Transverse colon (tissue), 4 donors: ENCODE measurements at regions of chr7 and their contacts with region 1.

Region 1: DNA sequence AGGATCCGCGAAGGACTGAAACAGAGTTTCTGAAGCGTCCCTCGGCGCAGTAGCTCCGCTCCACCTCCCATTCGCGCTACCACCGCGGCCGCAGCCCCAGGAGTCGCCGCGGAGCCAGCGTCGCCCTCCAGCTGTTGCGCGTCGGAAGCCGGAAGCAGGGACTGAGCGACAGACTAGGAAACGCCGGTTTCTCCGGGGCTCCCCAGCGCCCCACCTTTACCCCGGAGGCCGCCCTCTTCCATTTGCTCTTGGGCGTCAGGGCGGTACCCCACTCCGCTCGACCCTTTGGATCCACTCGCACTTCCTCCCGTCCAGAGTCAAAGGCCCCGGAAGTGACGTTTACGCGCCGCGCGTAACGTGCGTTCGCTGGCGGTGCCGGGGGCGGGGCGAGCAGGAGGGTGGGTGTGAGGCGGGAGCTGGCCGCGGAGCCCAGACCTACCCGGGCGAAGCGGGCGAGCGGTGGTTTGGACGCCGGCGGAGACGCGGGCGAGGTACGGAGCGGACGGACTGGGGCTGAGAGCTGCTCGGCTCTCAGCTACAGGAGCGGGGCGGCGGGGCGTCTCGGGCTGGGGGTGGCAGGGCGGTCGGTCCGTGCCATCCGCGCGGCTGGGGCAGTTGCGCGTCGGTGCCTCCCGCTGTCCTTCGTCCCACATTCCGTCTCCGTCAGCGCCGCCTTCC is at the start of gene RABGEF1:
- DNase-seq: peak; percentile 99
- H3K4me3 ChIP-seq: peak within 1 kb of the TSS; percentile 79 to 100 (median 85)
- H3K27ac ChIP-seq: peak within 1 kb of the TSS; percentile 94 to 98 (median 98)
- H3K4me1 ChIP-seq: peaks cover 3 to 29% (median 22%) of the 10 kb centered on the region in 4 donors
- H3K27me3 ChIP-seq: no peaks in the 10 kb centered on the region
- CTCF ChIP-seq: peak in 1 of 5 experiments; percentile 5
- EP300 ChIP-seq: no peak
- POLR2A ChIP-seq: peak; percentile 97
- total RNA-seq, gene RABGEF1: 12.7 to 32.9 (median 30.4) TPM

Region 2: GRCh38 chr7:65892835-65893234 is 847.6 kb before region 1 on chr7:
- in situ Hi-C with region 1: no loop called
- intact Hi-C with region 1: no loop called
- DNase-seq: no peak
- H3K4me3 ChIP-seq: no peak overlapping the region
- H3K27ac ChIP-seq: no peak overlapping the region
- H3K4me1 ChIP-seq: peaks cover 0 to 6% (median 0%) of the 10 kb centered on the region in 4 donors
- H3K27me3 ChIP-seq: no peaks in the 10 kb centered on the region
- CTCF ChIP-seq: no peak
- EP300 ChIP-seq: no peak
- POLR2A ChIP-seq: no peak

Region 3: DNA sequence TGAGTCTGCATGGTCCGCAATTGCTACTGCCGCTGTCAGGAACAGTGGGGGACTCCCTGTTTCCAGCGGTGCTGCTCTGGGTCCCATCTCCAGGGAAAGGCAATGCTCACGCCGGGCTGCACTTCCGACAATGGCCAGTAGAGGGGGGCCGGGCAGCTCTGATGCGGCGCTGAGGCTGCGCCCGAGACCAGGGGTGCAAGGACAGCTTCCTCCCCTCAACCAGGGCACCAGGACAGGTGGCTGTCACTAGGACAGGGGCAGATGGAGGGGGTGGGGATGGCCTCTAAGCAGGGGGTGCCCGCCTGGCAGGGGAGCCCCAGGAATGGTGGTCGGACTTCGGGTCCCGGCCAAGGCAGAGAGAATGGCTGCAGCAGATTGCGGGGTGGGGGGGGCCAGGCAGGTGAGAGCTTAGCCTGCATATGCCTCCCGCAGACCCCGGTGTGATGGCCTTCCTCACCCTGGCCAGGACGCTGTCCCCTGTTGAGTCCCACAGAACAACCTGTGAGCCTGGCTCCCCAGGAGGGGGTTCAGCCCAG is 182.8 kb before region 1 on chr7:
- in situ Hi-C with region 1: no loop called
- intact Hi-C with region 1: loop called (anchors 10 kb)
- DNase-seq: peak; percentile 78
- H3K4me3 ChIP-seq: no peak overlapping the region
- H3K27ac ChIP-seq: no peak overlapping the region
- H3K4me1 ChIP-seq: peaks cover 0 to 9% (median 4%) of the 10 kb centered on the region in 4 donors
- H3K27me3 ChIP-seq: no peaks in the 10 kb centered on the region
- CTCF ChIP-seq: peak; percentile 95 to 99 (median 98)
- EP300 ChIP-seq: no peak
- POLR2A ChIP-seq: no peak

Region 4: GRCh38 chr7:66681491-66682349 is 58.7 kb before region 1 on chr7:
- in situ Hi-C with region 1: loop called in 1 of 4 experiments (anchors 10 kb)
- intact Hi-C with region 1: no loop called
- DNase-seq: peak; percentile 99
- H3K4me3 ChIP-seq: peak overlapping the region; percentile 70 to 83 (median 82)
- H3K27ac ChIP-seq: peak overlapping the region; percentile 97 to 100 (median 98)
- H3K4me1 ChIP-seq: peaks cover 6 to 31% (median 18%) of the 10 kb centered on the region in 4 donors
- H3K27me3 ChIP-seq: no peaks in the 10 kb centered on the region
- CTCF ChIP-seq: no peak
- EP300 ChIP-seq: no peak
- POLR2A ChIP-seq: peak; percentile 97

Region 5: GRCh38 chr7:66693331-66693730 is 47.1 kb before region 1 on chr7:
- in situ Hi-C with region 1: loop called in 1 of 4 experiments (anchors 10 kb)
- intact Hi-C with region 1: loop called (anchors 1 kb)
- DNase-seq: no peak
- H3K4me3 ChIP-seq: no peak overlapping the region
- H3K27ac ChIP-seq: no peak overlapping the region
- H3K4me1 ChIP-seq: peaks cover 0 to 9% (median 2%) of the 10 kb centered on the region in 4 donors
- H3K27me3 ChIP-seq: no peaks in the 10 kb centered on the region
- CTCF ChIP-seq: no peak
- EP300 ChIP-seq: no peak
- POLR2A ChIP-seq: no peak

Region 6: GRCh38 chr7:66837007-66837406 is 96.6 kb after region 1 on chr7:
- in situ Hi-C with region 1: no loop called
- intact Hi-C with region 1: no loop called
- DNase-seq: peak; percentile 34
- H3K4me3 ChIP-seq: no peak overlapping the region
- H3K27ac ChIP-seq: no peak overlapping the region
- H3K4me1 ChIP-seq: no peaks in the 10 kb centered on the region
- H3K27me3 ChIP-seq: no peaks in the 10 kb centered on the region
- CTCF ChIP-seq: peak in 3 of 5 experiments; percentile 26 to 40 (median 37)
- EP300 ChIP-seq: no peak
- POLR2A ChIP-seq: no peak